Activated CD4-positive, alpha-beta memory T cell treated with anti-CD3 and anti-CD28 coated beads for 36 hours (primary cell): ENCODE measurements at regions of chr2 and their contacts with region 1.

Region 1: DNA sequence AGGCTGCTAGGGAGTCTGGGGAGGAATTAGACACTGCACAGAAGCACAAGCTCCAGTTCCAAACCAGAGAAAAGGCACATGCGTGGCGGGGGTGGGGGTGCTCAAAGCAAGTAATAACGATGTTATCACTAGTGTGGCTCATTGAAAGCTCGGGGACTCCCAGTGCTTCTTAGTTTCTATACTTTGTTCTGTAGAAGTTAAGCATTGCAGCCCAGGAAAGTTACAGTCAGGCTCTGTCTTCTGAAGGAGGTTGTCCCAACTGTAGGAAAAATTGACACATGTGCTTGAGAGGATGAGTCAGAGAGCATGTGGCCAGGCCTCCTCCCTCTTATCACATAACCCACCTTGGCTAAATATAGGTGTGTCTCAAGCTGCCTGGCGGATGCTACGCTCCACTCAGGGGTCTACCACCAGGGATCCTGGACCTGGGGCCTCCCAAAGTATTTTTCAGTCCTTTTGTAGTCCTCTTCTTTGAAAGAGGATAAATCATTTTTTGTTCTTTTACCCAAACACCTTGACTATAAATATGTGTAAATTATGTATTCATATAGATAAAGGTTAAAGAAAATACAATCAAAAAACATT is 3.8 kb downstream of the GALNT5 start:
- DNase-seq: peak; percentile 81
- H3K4me3 Mint-ChIP-seq: no peak overlapping the region
- H3K27ac Mint-ChIP-seq: peak overlapping the region; percentile 18
- H3K4me1 Mint-ChIP-seq: peaks cover 19% of the 10 kb centered on the region
- H3K27me3 Mint-ChIP-seq: peaks cover 5% of the 10 kb centered on the region

Region 2: GRCh38 chr2:157194097-157194688 is 67.1 kb before region 1 on chr2:
- CTCF ChIA-PET with region 1: no interaction called
- POLR2A ChIA-PET with region 1: no interaction called
- intact Hi-C with region 1: no loop called
- DNase-seq: peak; percentile 13
- H3K4me3 Mint-ChIP-seq: no peak overlapping the region
- H3K27ac Mint-ChIP-seq: no peak overlapping the region
- H3K4me1 Mint-ChIP-seq: peaks cover 1% of the 10 kb centered on the region
- H3K27me3 Mint-ChIP-seq: peaks cover 7% of the 10 kb centered on the region

Region 3: GRCh38 chr2:157245846-157246764 is 15.2 kb before region 1 on chr2:
- CTCF ChIA-PET with region 1: interaction called, 3 read pairs
- POLR2A ChIA-PET with region 1: interaction called, 3 read pairs
- intact Hi-C with region 1: loop called (anchors 1 kb)
- DNase-seq: peak; percentile 64
- H3K4me3 Mint-ChIP-seq: no peak overlapping the region
- H3K27ac Mint-ChIP-seq: peak overlapping the region; percentile 51
- H3K4me1 Mint-ChIP-seq: peaks cover 15% of the 10 kb centered on the region
- H3K27me3 Mint-ChIP-seq: peaks cover 18% of the 10 kb centered on the region

Region 4: DNA sequence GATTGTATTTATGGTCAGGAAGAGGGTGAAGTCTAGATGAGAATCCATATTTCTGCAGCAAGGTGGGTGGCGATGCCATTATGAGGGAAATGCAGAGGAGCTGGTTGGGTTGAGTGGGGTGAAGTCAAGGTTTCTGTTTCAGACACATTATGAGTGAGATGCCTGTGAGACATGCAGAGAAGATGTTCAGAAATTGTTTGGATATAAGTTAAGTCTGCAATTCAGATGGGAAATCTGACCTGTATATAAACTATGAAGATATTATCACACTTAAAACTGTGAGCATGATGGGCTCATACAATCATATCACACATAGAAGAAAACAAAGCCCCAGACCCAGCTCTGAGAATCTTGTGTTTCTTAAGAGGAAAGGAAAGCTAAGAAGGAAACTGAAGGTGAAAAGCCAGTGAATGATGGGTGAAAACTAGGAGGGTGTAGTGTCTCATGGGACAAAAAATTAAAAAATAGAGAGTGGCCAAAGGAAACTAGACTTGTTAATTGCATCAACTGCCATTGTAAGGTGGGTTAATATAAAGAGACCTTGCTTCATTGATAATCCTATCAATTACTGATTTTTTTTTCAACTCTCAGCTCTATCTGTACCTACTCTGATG is 10.4 kb after region 1 on chr2:
- CTCF ChIA-PET with region 1: no interaction called
- POLR2A ChIA-PET with region 1: interaction called, 5 read pairs
- intact Hi-C with region 1: loop called (anchors 1 kb)
- DNase-seq: peak; percentile 38
- H3K4me3 Mint-ChIP-seq: no peak overlapping the region
- H3K27ac Mint-ChIP-seq: no peak overlapping the region
- H3K4me1 Mint-ChIP-seq: peaks cover 22% of the 10 kb centered on the region
- H3K27me3 Mint-ChIP-seq: peaks cover 2% of the 10 kb centered on the region

Region 5: DNA sequence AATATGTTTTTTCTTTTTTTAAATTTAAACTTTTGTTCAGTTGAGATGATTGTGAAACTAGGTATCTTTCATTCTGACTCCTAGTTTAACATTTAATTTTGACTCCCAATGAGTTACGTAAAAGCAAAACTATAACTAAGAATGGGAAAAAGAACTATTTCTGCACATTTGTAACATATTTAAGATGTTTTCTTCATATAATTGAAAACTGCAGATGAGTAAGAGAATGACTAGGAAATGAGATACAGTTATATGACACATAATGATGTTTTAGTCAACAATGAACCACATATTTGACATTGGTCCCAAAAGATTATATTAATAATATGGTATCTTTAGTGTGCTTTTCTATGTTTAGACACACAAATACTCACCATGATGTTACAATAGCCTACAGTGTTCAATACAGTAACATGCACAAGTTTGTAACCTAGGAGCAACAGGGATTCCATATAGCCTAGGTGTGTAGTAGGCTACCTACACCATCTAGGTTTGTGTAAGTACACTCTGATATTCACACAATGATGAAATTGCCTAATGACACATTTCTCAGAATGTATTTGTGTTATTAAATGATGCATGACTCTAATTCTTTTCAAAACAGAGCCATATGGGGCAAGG is 51.7 kb after region 1 on chr2:
- CTCF ChIA-PET with region 1: no interaction called
- POLR2A ChIA-PET with region 1: no interaction called
- intact Hi-C with region 1: loop called (anchors 2 kb)
- DNase-seq: no peak
- H3K4me3 Mint-ChIP-seq: no peak overlapping the region
- H3K27ac Mint-ChIP-seq: no peak overlapping the region
- H3K4me1 Mint-ChIP-seq: peaks cover 34% of the 10 kb centered on the region
- H3K27me3 Mint-ChIP-seq: peaks cover 2% of the 10 kb centered on the region

Region 6: GRCh38 chr2:157404363-157404762 is 143.1 kb after region 1 on chr2:
- CTCF ChIA-PET with region 1: no interaction called
- POLR2A ChIA-PET with region 1: interaction called, 3 read pairs
- intact Hi-C with region 1: loop called (anchors 1 kb)
- DNase-seq: peak; percentile 73
- H3K4me3 Mint-ChIP-seq: no peak overlapping the region
- H3K27ac Mint-ChIP-seq: peak overlapping the region; percentile 78
- H3K4me1 Mint-ChIP-seq: peaks cover 68% of the 10 kb centered on the region
- H3K27me3 Mint-ChIP-seq: no peaks in the 10 kb centered on the region